CD4-positive, alpha-beta memory T cell (primary cell): ENCODE measurements at regions of chr3 and their contacts with region 1.

Region 1: GRCh38 chr3:157572559-157573270 is 69.5 kb upstream of the VEPH1 start:
- DNase-seq: peak in 4 of 5 donors; percentile 4 to 19 (median 8)
- H3K4me3 ChIP-seq: no peak overlapping the region
- H3K4me3 Mint-ChIP-seq: no peak overlapping the region
- H3K27ac ChIP-seq: no peak overlapping the region
- H3K27ac Mint-ChIP-seq: no peak overlapping the region
- H3K4me1 ChIP-seq: no peaks in the 10 kb centered on the region
- H3K4me1 Mint-ChIP-seq: peaks cover 0 to 3% (median 1%) of the 10 kb centered on the region in 4 donors
- H3K27me3 ChIP-seq: no peaks in the 10 kb centered on the region
- H3K27me3 Mint-ChIP-seq: peaks cover 4% of the 10 kb centered on the region in 2 donors

Region 2: DNA sequence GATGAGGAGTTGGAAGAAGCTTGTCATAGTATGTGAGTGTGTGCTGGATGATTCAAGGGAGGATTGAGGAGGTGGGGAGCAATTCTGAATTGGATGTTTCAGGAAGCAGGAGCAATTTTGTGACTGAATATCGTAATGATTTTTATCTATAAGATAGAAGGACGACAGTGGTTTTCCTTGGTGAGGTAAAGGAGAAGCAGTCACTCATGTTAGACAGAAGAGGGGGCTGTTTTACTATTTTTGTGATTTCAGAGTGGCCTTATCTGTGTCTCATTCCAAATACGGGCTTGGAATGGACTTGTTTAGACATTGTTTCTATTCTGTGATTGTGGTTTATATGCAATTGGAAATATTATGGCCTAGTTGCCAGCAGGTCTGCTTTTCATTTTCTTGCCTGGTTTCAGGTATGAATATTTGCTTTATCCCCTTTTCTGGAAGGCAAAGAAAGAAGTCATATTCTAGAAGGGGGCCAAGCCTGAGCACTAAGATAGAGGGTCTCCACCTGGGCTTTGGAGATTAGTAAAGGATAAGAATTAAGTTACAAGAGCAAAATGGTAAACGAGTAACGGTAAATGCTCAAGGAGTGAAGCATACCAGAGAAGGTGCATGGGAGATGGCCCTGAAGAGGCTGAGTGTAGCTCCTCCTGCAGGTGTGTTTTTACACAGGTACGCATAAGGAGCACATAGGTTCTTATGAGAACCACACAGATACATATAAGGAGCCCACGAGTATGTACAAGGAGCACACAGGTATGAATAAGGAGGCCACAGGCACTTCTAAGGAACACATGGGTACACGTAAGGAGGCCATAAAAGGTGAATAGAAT is 1577.0 kb before region 1 on chr3:
- CTCF ChIA-PET with region 1: no interaction called
- POLR2A ChIA-PET with region 1: no interaction called
- intact Hi-C with region 1: loop called (anchors 5 kb)
- DNase-seq: peak in 3 of 5 donors; percentile 5 to 13 (median 12)
- H3K4me3 ChIP-seq: no peak overlapping the region
- H3K4me3 Mint-ChIP-seq: no peak overlapping the region
- H3K27ac ChIP-seq: no peak overlapping the region
- H3K27ac Mint-ChIP-seq: no peak overlapping the region
- H3K4me1 ChIP-seq: no peaks in the 10 kb centered on the region
- H3K4me1 Mint-ChIP-seq: no peaks in the 10 kb centered on the region
- H3K27me3 ChIP-seq: no peaks in the 10 kb centered on the region
- H3K27me3 Mint-ChIP-seq: peaks cover 2 to 4% of the 10 kb centered on the region in 2 donors

Region 3: DNA sequence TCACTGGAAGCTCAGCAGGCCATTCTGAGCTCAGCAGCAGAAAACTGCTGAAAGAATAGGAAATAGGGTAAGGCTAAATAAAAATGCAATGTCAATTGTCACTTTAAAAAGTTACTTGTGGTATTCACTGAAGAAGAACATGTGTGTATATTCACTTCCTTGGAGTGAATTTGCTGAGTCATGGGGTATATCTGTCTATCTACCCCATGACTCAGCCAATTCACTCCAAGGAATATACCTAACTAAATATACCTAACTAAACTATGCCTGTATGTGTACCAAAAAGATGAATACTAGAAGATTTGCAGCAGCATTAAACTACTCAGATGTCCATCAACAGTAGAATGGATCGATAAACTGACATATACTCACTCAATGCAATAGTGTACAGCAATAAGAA is 1521.8 kb before region 1 on chr3:
- CTCF ChIA-PET with region 1: no interaction called
- POLR2A ChIA-PET with region 1: no interaction called
- intact Hi-C with region 1: loop called (anchors 5 kb)
- DNase-seq: no peak
- H3K4me3 ChIP-seq: no peak overlapping the region
- H3K4me3 Mint-ChIP-seq: no peak overlapping the region
- H3K27ac ChIP-seq: no peak overlapping the region
- H3K27ac Mint-ChIP-seq: no peak overlapping the region
- H3K4me1 ChIP-seq: no peaks in the 10 kb centered on the region
- H3K4me1 Mint-ChIP-seq: no peaks in the 10 kb centered on the region
- H3K27me3 ChIP-seq: no peaks in the 10 kb centered on the region
- H3K27me3 Mint-ChIP-seq: peaks cover 8 to 9% of the 10 kb centered on the region in 2 donors

Region 4: GRCh38 chr3:157532529-157533297 is 40.0 kb before region 1 on chr3:
- CTCF ChIA-PET with region 1: interaction called, 5 read pairs
- POLR2A ChIA-PET with region 1: no interaction called
- intact Hi-C with region 1: loop called (anchors 1 kb)
- DNase-seq: peak in 4 of 5 donors; percentile 4 to 10 (median 6)
- H3K4me3 ChIP-seq: no peak overlapping the region
- H3K4me3 Mint-ChIP-seq: no peak overlapping the region
- H3K27ac ChIP-seq: no peak overlapping the region
- H3K27ac Mint-ChIP-seq: no peak overlapping the region
- H3K4me1 ChIP-seq: no peaks in the 10 kb centered on the region
- H3K4me1 Mint-ChIP-seq: no peaks in the 10 kb centered on the region
- H3K27me3 ChIP-seq: no peaks in the 10 kb centered on the region
- H3K27me3 Mint-ChIP-seq: peaks cover 0 to 1% of the 10 kb centered on the region in 2 donors